PC-9 (cell line): ENCODE measurements at regions of chr3 and their contacts with region 1.

Region 1: DNA sequence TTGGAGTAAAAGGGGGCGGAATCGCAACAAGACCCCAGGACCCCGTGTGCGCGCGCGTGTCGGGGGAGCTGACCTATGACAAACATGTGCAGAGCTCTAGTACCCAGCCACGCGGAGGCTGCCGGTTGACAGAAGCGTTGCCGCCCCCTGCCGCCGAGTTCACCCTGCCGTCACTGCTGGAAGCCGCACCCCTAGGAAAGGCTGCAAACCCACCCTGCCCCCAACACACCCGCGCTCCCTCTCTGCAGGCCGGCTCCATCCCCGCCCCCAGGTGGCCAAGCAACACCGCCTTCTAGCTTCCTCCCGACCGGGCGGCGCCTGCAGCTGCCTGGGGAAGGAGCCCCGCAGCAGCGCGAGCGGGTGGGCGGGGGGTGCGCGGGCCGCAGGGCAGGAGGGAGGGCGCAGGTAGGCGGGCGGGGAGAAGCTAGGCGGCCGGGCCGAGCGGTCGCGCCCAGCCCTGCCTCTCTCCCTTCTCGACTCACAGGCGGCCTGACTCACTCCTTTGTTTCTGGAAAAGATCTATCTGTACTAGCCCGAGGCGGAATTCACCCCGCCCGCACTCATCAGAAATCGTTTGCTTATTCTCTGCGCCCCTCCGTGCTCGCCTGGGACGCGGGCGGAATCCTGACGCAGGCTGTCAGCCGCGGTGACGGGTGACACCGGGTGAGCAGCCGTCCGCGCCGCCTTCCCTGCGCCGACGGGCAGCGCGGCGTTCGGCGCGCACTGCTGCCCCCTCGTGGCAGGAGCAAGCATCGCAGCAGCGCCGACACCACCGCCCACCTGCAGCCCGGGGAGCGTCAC is 160.8 kb downstream of the GAP43 start:
- DNase-seq: peak; percentile 83 to 95
- H3K4me3 ChIP-seq: peak overlapping the region; percentile 73
- H3K27ac ChIP-seq: peak overlapping the region; percentile 63
- H3K4me1 ChIP-seq: peaks cover 35% of the 10 kb centered on the region
- H3K27me3 ChIP-seq: no peaks in the 10 kb centered on the region
- CTCF ChIP-seq: peak; percentile 95

Region 2: DNA sequence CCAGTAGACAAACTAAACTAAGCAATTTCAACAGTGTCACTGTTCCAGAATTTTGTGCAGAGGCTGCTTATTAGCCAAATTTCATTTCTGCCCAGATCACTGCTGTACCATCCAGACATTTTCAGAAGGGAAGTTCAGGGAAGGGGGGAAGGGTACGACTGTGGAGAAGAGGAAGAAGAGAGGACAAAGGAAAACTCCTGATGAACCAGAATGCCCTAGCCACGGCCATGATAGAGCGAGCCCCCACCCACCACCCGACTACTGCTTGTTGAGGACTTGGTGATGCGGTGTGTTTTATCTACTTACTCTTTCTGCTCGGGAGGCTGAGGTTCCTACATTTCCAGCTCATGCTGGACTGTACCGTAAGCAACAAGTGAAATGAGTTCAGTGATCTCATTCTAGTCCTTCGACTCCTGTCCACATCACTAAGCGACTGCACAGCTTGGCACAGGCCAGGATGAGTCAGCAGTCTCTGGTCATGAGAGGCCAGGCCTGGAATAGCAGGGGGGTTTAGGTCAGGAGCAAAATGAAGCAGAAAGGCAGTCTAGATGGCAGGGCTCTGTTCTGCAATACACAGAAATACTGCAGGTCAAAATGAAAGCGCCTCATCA is 1159.5 kb before region 1 on chr3:
- CTCF ChIA-PET with region 1: no interaction called
- POLR2A ChIA-PET with region 1: no interaction called
- intact Hi-C with region 1: loop called (anchors 10 kb)
- DNase-seq: peak; percentile 81 to 91
- H3K4me3 ChIP-seq: peak overlapping the region; percentile 75
- H3K27ac ChIP-seq: peak overlapping the region; percentile 90
- H3K4me1 ChIP-seq: peaks cover 35% of the 10 kb centered on the region
- H3K27me3 ChIP-seq: no peaks in the 10 kb centered on the region
- CTCF ChIP-seq: no peak

Region 3: DNA sequence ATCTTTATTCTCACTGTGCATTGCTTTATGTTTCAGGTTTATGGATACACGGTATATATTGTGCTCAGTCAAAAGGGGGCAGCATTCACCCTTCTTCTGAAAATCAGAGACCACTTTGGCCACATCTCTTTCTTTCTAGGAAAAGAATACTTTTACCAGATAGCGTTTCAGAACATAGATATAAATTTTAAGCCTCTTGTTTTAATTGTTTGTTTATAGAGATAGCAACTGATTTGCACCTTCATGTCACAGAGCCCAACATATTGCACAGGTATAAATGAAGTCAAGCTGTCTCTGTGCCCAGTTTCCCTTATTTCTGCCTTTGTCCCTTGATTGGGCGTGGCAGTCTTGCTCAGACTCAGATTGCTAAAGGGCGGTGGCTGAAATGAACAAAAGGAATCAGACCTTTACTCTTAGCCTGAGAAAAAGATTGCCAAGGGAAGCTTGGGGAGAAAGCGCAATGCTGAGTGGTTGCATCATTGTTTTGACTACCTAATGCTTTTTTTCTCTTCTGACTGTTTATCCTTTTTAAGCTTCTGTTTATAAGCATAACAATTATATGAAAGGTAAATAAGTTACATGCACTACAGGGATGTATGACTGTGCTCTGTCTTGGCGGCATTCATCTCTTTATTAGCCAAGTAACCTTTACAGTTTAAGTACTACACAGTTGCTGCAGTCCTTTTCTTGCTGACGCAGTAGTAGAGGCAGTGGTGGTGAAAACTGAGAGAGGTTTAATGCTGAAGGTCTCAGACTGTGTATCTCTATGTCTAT is 566.3 kb before region 1 on chr3:
- CTCF ChIA-PET with region 1: interaction called, 5 read pairs
- POLR2A ChIA-PET with region 1: no interaction called
- intact Hi-C with region 1: loop called (anchors 1 kb)
- DNase-seq: peak; percentile 40 to 51
- H3K4me3 ChIP-seq: no peak overlapping the region
- H3K27ac ChIP-seq: no peak overlapping the region
- H3K4me1 ChIP-seq: peaks cover 7% of the 10 kb centered on the region
- H3K27me3 ChIP-seq: no peaks in the 10 kb centered on the region
- CTCF ChIP-seq: peak; percentile 84

Region 4: GRCh38 chr3:115239717-115240116 is 544.4 kb before region 1 on chr3:
- CTCF ChIA-PET with region 1: no interaction called
- POLR2A ChIA-PET with region 1: no interaction called
- intact Hi-C with region 1: loop called (anchors 5 kb)
- DNase-seq: peak; percentile 59 to 68
- H3K4me3 ChIP-seq: no peak overlapping the region
- H3K27ac ChIP-seq: peak overlapping the region; percentile 43
- H3K4me1 ChIP-seq: peaks cover 12% of the 10 kb centered on the region
- H3K27me3 ChIP-seq: no peaks in the 10 kb centered on the region
- CTCF ChIP-seq: no peak

Region 5: GRCh38 chr3:115615001-115615814 is 168.9 kb before region 1 on chr3:
- CTCF ChIA-PET with region 1: no interaction called
- POLR2A ChIA-PET with region 1: no interaction called
- intact Hi-C with region 1: loop called (anchors 10 kb)
- DNase-seq: peak; percentile 47 to 48
- H3K4me3 ChIP-seq: no peak overlapping the region
- H3K27ac ChIP-seq: no peak overlapping the region
- H3K4me1 ChIP-seq: no peaks in the 10 kb centered on the region; the same call in none of the 2 replicates
- H3K27me3 ChIP-seq: no peaks in the 10 kb centered on the region
- CTCF ChIP-seq: no peak

Region 6: GRCh38 chr3:115814778-115815380 is 30.7 kb after region 1 on chr3:
- CTCF ChIA-PET with region 1: interaction called, 7 read pairs
- POLR2A ChIA-PET with region 1: no interaction called
- intact Hi-C with region 1: loop called (anchors 1 kb)
- DNase-seq: peak in 1 of 2 experiments; percentile 76
- H3K4me3 ChIP-seq: no peak overlapping the region
- H3K27ac ChIP-seq: no peak overlapping the region
- H3K4me1 ChIP-seq: no peaks in the 10 kb centered on the region
- H3K27me3 ChIP-seq: no peaks in the 10 kb centered on the region
- CTCF ChIP-seq: peak; percentile 99